Left cardiac atrium (tissue), 4 donors: ENCODE measurements at regions of chr21 and their contacts with region 1.

Region 1: GRCh38 chr21:39518138-39518846 is 66.5 kb downstream of the SH3BGR start:
- DNase-seq: peak; percentile 47
- ATAC-seq: peak; percentile 71 to 82

Region 2: DNA sequence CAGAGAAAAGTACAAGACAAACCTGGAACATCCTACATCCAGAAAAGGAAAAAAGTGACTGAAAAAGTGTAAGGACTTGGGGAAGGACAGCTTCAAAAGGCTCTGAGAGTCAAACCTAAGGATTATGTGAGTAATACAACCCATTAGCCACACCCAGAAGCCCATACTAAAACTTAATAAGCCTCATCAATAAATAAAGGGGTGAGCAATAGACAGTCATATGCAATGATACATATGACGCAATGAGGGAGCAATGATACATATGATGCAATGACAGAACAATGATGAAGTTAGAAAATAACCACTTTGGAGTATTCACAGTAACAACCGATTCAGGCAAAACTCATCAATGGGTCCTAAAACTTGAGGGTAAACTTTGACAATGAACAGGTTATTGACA is 254.9 kb before region 1 on chr21:
- intact Hi-C with region 1: no loop called
- DNase-seq: no peak
- ATAC-seq: no peak

Region 3: GRCh38 chr21:39715804-39716397 is 197.6 kb after region 1 on chr21:
- intact Hi-C with region 1: loop called (anchors 1 to 2 kb)
- DNase-seq: peak; percentile 63
- ATAC-seq: peak; percentile 15 to 38